Left ventricle myocardium superior (tissue), 1 donor: ENCODE measurements at regions of chr3 and their contacts with region 1.

Region 1: GRCh38 chr3:67109651-67110204 is 111.6 kb downstream of the KBTBD8 start:
- DNase-seq: no peak
- ATAC-seq: no peak

Region 2: DNA sequence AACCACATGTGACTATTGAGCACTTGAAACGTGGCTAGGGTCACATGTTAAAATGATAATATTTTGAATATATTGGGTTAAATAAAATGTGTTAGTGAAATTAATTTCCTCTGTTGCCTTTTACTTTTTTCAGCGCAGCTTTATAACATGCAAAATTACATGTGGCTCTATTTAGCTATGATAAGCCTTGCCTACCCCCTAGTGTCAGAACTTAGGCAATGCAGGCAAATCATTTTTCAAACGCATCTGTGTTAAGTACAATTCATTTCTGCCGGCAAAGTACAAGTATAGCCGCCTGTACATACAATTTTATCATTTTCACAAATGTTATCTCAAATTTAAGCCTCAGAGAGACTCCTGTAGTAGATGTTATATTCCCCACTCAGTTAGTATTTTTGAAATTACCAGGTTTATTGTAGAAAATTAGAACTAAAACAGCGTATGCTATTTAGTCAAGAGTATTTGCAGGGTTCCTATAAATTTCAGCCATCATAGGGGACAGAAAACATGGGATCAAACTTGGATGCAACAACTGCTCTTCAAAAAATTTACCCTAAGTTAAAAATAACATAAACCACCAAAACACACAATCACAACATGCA is 1766.5 kb after region 1 on chr3:
- intact Hi-C with region 1: loop called (anchors 10 kb)
- DNase-seq: no peak
- ATAC-seq: peak; percentile 47